Ovary (tissue), 10 donors: ENCODE measurements at regions of chr1 and their contacts with region 1.

Region 1: GRCh38 chr1:205668951-205669340 is 11.4 kb downstream of the SLC45A3 start:
- DNase-seq: no peak
- H3K4me3 ChIP-seq: no peak overlapping the region
- H3K27ac ChIP-seq: no peak overlapping the region
- H3K4me1 ChIP-seq: peaks cover 2% of the 10 kb centered on the region
- H3K27me3 ChIP-seq: no peaks in the 10 kb centered on the region
- CTCF ChIP-seq: no peak
- EP300 ChIP-seq: no peak
- POLR2A ChIP-seq: no peak

Region 2: GRCh38 chr1:205977402-205978014 is 308.6 kb after region 1 on chr1:
- intact Hi-C with region 1: loop called in 2 of 4 experiments (anchors 5 to 10 kb)
- DNase-seq: peak; percentile 67 to 86 (median 78)
- H3K4me3 ChIP-seq: no peak overlapping the region
- H3K27ac ChIP-seq: no peak overlapping the region
- H3K4me1 ChIP-seq: peaks cover 4% of the 10 kb centered on the region
- H3K27me3 ChIP-seq: no peaks in the 10 kb centered on the region
- CTCF ChIP-seq: peak; percentile 80 to 91 (median 87)
- EP300 ChIP-seq: no peak
- POLR2A ChIP-seq: no peak